Right lobe of liver (tissue), 6 donors: ENCODE measurements at regions of chr7 and their contacts with region 1.

Region 1: GRCh38 chr7:22488643-22489462 is 11.1 kb downstream of the STEAP1B start:
- DNase-seq: peak in 2 of 3 donors; percentile 35 to 68
- ATAC-seq: peak; percentile 92 to 97 (median 94)
- H3K4me3 ChIP-seq: no peak overlapping the region
- H3K27ac ChIP-seq: no peak overlapping the region
- H3K4me1 ChIP-seq: no peaks in the 10 kb centered on the region
- H3K27me3 ChIP-seq: no peaks in the 10 kb centered on the region
- CTCF ChIP-seq: peak; percentile 88 to 93 (median 90)
- POLR2A ChIP-seq: no peak

Region 2: GRCh38 chr7:22110227-22110839 is 378.5 kb before region 1 on chr7:
- intact Hi-C with region 1: loop called (anchors 5 kb)
- DNase-seq: peak in 1 of 3 donors; percentile 68
- ATAC-seq: peak; percentile 85 to 91 (median 86)
- H3K4me3 ChIP-seq: no peak overlapping the region
- H3K27ac ChIP-seq: no peak overlapping the region
- H3K4me1 ChIP-seq: peaks cover 0 to 9% (median 0%) of the 10 kb centered on the region in 4 donors
- H3K27me3 ChIP-seq: no peaks in the 10 kb centered on the region
- CTCF ChIP-seq: peak; percentile 58 to 76 (median 72)
- POLR2A ChIP-seq: no peak